Motor neuron (in vitro differentiated cells): ENCODE measurements at regions of chr5 and their contacts with region 1.

Region 1: GRCh38 chr5:74640450-74640953 is at the start of gene ENC1:
- ATAC-seq: peak; percentile 66 to 85 (median 81)
- H3K4me3 ChIP-seq: peak within 1 kb of the TSS; percentile 58 to 78 (median 64)
- H3K27ac ChIP-seq: peak within 1 kb of the TSS in 1 of 2 donors; percentile 80
- H3K4me1 ChIP-seq: peaks cover 5 to 15% of the 10 kb centered on the region in 2 donors
- total RNA-seq, gene ENC1: 3.4 to 159 (median 32.7) TPM

Region 2: DNA sequence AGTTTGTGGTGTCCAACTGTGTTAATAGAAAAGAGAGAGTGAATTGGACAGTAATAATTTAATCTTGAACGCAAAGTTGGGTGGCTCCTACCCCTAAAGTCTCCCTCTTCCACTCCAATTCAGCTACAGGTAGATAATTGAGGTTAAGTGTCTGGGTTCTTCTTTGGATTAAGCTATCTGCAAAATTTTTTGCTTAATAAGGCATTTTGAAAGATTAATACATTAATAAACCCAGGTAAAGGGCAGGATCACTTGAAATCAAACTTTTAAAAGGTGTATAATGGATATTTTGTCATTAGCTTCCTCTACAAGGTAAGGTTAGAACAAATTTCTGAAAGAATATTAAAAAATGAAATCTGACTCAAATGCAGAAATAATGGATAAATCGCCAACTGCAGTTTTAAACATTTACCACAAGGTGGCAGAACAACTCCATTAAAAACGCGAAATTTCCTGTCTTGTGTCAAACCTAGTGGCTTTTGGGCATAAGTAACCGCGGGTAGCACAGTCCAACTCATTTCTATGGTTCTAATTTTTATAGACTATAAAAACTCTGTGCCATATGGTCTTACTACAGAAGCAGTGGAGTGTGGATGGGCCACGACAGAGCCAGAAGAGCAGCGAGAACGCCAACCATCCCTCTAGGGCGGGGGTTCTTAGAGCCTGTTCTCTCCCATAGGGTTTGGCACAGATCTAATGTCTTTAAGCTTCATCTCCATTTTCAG is 738.0 kb before region 1 on chr5:
- in situ Hi-C with region 1: loop called in 8 of 9 experiments (anchors 5 to 10 kb)
- ATAC-seq: peak in 5 of 8 experiments; percentile 23 to 55 (median 30)
- H3K4me3 ChIP-seq: no peak overlapping the region
- H3K27ac ChIP-seq: no peak overlapping the region
- H3K4me1 ChIP-seq: no peaks in the 10 kb centered on the region

Region 3: DNA sequence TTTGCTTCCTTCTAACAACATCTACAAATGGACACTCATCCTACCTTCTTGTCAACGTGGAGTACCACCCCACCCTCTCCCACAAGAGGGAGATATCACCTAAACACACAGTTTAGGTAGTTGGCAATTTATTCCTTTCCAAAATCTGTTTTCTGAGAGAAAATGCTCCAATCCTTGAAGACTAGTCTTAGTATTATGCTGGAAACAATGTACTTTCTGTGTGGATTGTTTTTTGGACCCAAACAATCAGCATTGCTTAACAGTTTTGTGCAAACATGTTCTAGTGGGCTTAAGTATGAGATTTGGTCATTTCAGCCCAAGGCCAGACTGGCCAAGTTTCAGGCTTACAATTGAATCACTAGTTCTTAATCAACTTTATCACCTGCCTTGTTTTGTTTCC is 655.4 kb before region 1 on chr5:
- in situ Hi-C with region 1: loop called in 1 of 9 experiments (anchors 25 kb)
- ATAC-seq: peak in 1 of 8 experiments; percentile 34
- H3K4me3 ChIP-seq: no peak overlapping the region
- H3K27ac ChIP-seq: no peak overlapping the region
- H3K4me1 ChIP-seq: no peaks in the 10 kb centered on the region

Region 4: GRCh38 chr5:74035521-74035981 is 605.0 kb before region 1 on chr5:
- in situ Hi-C with region 1: loop called in 2 of 9 experiments (anchors 10 to 25 kb)
- ATAC-seq: peak in 4 of 8 experiments; percentile 18 to 79 (median 78)
- H3K4me3 ChIP-seq: no peak overlapping the region
- H3K27ac ChIP-seq: no peak overlapping the region
- H3K4me1 ChIP-seq: peaks cover 0 to 4% of the 10 kb centered on the region in 2 donors